ENCODE measurements at regions of chr1 and their contacts with region 1.

Region 1: DNA sequence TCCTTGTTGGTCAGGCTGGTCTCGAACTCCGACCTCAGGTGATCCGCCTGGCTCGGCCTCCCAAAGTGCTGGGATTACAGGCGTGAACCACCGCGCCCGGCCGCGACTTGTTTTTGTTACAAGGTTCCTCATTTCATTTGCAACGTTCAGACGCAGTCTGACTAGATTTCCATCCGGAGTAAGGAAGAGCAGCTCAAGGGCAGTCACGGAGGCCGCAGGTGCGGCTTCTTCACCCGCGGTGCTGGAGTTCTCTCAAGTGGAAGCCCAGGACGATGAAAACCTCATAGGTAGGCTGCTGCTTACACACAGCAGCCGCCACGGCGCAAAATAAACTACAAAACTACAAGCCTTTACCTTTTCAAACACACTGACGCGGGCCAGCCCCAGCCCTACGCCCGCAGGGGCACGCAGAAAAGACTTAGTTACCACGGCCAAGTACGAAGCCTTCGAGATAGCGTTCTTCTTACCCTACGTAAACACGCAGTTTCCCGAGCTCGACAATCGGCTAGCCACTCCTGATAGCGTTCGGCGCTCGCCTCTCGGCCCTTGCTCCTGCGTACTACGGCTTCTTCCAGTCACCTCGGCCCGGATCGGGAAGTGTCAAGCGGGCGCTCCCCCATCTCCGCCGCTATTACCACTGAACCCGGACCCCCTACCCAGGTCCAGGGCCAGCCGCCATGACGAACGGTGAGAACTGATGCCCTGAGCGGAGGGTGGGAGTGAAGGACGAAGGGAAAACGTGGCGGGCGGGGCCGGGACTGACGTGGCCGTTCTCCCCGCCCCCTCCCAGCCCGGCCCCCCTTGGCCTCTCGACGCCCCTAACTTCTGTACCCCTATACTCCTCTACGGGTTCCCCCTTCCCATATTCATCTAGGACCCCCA is at the start of gene TMEM167B:
- DNase-seq: peak; percentile 78
- ATAC-seq: peak; percentile 89
- H3K4me3 ChIP-seq: peak within 1 kb of the TSS; percentile 95
- H3K27ac ChIP-seq: peak within 1 kb of the TSS; percentile 91
- H3K4me1 ChIP-seq: peaks cover 9% of the 10 kb centered on the region
- H3K27me3 ChIP-seq: no peaks in the 10 kb centered on the region
- CTCF ChIP-seq: no peak
- EP300 ChIP-seq: 0 out of 4 replicates have a peak, but pooled peaks of 1 of the 2 experiments have one; percentile 6
- POLR2A ChIP-seq: peak; percentile 89
- RAD21 ChIP-seq: no peak
- polyA plus RNA-seq, gene TMEM167B: 15.6 to 24.8 TPM

Region 2: DNA sequence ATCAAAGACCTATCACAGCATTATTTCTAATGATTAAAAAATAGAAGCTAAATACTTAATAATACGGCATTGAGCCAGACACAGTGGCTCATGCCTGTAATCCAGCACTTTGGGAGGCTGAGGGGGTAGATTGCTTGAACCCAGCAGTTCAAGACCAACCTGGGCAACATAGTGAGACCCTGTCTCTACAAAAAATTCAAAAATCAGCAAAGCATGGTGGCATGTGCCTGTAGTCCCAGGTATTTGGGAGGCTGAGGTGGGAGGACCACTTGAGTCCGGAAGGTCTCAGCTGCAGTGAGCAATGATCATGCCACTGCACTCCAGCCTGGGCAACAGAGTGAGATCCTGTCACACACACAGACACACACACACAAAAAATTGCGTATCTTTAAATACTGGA is 25.3 kb before region 1 on chr1:
- CTCF ChIA-PET with region 1: no interaction called
- POLR2A ChIA-PET with region 1: no interaction called
- RAD21 ChIA-PET with region 1: no interaction called
- SMC1A ChIA-PET with region 1: no interaction called
- in situ Hi-C with region 1: no loop called
- intact Hi-C with region 1: no loop called
- DNase-seq: no peak
- ATAC-seq: no peak
- H3K4me3 ChIP-seq: no peak overlapping the region
- H3K27ac ChIP-seq: no peak overlapping the region
- H3K4me1 ChIP-seq: no peaks in the 10 kb centered on the region
- H3K27me3 ChIP-seq: no peaks in the 10 kb centered on the region
- CTCF ChIP-seq: no peak
- EP300 ChIP-seq: no peak
- POLR2A ChIP-seq: no peak
- RAD21 ChIP-seq: no peak

Region 3: DNA sequence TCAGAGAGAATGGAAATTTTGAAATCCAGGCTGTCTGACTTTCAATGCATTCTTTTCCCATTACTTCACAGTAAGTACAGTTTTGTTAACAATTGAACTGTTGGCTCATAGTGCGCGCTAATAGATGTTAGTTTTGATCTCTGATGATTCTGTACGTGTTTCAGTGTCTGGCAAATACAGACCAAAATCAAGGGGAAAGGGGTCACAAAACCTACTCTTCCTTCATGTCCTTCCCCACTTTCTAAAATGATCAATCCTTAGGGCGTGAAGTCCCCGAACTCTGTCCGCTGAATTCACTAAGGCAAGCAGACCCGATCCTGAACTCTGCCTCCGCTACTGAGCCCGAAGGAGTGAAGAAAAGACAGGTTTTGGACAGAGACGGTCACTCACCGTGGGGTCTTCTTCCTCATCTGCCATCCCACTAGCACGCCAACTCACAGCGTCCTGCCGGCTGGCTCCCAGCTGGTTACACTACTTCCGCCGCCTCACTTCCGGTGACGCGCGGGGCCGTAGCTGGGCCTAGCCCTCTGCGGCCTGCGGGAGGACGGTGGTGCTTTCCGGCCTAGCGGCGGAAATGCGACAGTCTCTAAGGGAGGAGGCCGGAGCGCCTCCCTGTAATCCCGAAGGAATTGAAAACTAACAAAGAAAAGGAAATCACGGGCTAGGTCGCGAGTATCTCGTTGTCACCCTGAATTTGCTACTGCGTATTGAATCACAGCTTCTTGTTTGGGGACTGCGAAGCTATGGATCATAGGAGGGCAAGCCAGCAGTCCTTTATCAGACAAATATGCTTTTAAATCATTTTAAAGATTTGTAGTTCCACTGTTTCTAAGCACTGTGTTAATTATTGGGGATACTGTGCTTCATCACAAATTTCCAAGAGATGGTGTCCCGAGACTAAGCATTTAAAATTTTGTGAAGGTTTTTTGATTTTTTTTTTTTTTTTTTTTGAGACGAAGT is 14.6 kb before region 1 on chr1 and contains the start of gene TAF13:
- CTCF ChIA-PET with region 1: interaction called, 23 read pairs
- POLR2A ChIA-PET with region 1: interaction called, 24 read pairs
- RAD21 ChIA-PET with region 1: interaction called, 5 read pairs
- SMC1A ChIA-PET with region 1: interaction called, 22 read pairs
- in situ Hi-C with region 1: no loop called
- intact Hi-C with region 1: no loop called
- DNase-seq: peak; percentile 75
- ATAC-seq: peak; percentile 100
- H3K4me3 ChIP-seq: peak within 1 kb of the TSS; percentile 79
- H3K27ac ChIP-seq: peak within 1 kb of the TSS; percentile 89
- H3K4me1 ChIP-seq: no peaks in the 10 kb centered on the region; the same call in none of the 2 replicates
- H3K27me3 ChIP-seq: no peaks in the 10 kb centered on the region
- CTCF ChIP-seq: no peak
- EP300 ChIP-seq: peak in 1 of 2 experiments; percentile 47; a peak in 1 of 4 replicates
- POLR2A ChIP-seq: peak; percentile 98
- RAD21 ChIP-seq: no peak
- polyA plus RNA-seq, gene TAF13: 8.1 to 14.9 TPM

Region 4: DNA sequence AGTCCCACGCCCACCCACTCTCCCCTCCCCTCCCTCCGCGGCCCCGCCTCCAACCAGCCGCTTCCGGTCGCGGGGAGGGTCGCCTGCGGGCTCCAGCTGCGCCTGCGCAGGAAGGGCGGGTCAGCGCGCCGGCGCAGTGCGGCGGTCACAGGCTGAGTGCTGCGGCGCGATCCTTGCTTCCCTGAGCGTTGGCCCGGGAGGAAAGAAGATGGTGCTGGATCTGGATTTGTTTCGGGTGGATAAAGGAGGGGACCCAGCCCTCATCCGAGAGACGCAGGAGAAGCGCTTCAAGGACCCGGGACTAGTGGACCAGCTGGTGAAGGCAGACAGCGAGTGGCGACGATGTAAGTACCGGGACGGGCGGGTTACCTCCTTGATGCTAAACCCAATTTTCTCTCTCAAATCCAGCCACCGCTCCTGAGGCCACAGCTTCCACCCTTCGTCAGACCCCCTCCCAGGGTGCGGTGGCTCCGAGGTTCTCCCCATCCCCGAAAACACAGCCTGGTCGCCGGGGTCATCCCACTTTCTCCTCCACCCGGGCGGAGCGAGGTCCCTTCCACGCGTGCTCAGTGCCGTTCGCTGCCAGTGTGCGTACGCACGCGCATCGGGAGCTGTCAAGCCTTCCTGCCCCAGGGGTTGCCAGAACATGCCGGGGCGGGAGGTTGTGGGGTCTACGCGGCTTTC is 123.5 kb after region 1 on chr1 and contains the start of gene SARS1:
- CTCF ChIA-PET with region 1: interaction called, 3 read pairs
- POLR2A ChIA-PET with region 1: interaction called, 10 read pairs
- RAD21 ChIA-PET with region 1: no interaction called
- SMC1A ChIA-PET with region 1: no interaction called
- in situ Hi-C with region 1: no loop called
- intact Hi-C with region 1: no loop called
- DNase-seq: peak; percentile 62
- ATAC-seq: peak; percentile 94
- H3K4me3 ChIP-seq: peak within 1 kb of the TSS; percentile 89
- H3K27ac ChIP-seq: peak within 1 kb of the TSS; percentile 88
- H3K4me1 ChIP-seq: no peaks in the 10 kb centered on the region
- H3K27me3 ChIP-seq: no peaks in the 10 kb centered on the region
- CTCF ChIP-seq: no peak
- EP300 ChIP-seq: 0 out of 4 replicates have a peak, but pooled peaks of 1 of the 2 experiments have one; percentile 13
- POLR2A ChIP-seq: peak; percentile 82
- RAD21 ChIP-seq: no peak
- polyA plus RNA-seq, gene SARS1: 148 to 202 TPM

Measured in GM12878 (cell line).